ENCODE measurements at regions of chr22 and their contacts with region 1.

Region 1: DNA sequence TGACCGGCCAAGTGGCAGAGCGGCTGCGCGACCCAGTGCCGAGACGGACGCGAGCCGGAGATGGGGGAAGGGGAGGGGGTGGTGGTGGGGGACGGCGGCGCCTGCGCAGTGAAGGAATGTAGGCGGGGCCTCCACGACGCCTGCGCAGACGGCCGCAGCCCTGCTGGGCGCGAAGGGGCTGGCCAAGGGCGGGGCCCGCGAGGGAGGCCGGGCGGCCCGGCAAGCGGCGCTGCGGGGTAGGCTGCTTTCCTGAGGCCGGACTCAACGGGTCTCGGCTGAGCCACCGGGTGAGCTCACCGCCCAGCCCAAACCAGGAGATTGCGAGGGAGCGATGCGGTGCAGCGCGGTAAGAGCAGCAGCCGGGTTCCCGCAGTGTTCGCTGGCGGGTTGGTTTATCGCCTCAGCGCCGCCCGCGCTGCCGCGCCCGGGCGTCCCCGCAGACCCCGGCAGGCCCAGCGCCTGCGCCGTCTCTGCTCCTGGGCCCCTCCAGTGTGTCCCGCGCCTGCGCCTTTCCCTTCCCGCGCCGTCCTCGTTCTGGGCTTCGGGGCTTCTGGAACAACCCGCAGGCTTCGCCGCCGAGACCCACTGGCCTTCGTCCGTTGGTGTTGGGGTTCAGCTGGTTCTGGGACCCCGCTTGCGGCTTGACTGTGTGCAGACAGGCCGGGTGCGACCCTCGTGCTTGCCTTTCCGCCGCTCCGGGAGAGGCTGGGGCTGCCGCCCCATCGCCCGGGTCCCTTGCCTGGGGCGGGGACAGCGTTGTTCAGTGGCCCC is at the start of gene SPECC1L:
- DNase-seq: peak; percentile 95
- ATAC-seq: peak; percentile 90
- H3K4me3 Mint-ChIP-seq: peak within 1 kb of the TSS; percentile 78
- H3K27ac Mint-ChIP-seq: peak within 1 kb of the TSS; percentile 82
- H3K4me1 Mint-ChIP-seq: peaks cover 38% of the 10 kb centered on the region
- H3K27me3 Mint-ChIP-seq: no peaks in the 10 kb centered on the region
- total RNA-seq, gene SPECC1L: 31.5 to 38.2 TPM

Region 2: GRCh38 chr22:23437779-23438178 is 833.0 kb before region 1 on chr22:
- CTCF ChIA-PET with region 1: no interaction called
- POLR2A ChIA-PET with region 1: no interaction called
- intact Hi-C with region 1: no loop called
- DNase-seq: no peak
- ATAC-seq: no peak
- H3K4me3 Mint-ChIP-seq: no peak overlapping the region
- H3K27ac Mint-ChIP-seq: no peak overlapping the region
- H3K4me1 Mint-ChIP-seq: peaks cover 7% of the 10 kb centered on the region
- H3K27me3 Mint-ChIP-seq: peaks cover 3% of the 10 kb centered on the region

Region 3: DNA sequence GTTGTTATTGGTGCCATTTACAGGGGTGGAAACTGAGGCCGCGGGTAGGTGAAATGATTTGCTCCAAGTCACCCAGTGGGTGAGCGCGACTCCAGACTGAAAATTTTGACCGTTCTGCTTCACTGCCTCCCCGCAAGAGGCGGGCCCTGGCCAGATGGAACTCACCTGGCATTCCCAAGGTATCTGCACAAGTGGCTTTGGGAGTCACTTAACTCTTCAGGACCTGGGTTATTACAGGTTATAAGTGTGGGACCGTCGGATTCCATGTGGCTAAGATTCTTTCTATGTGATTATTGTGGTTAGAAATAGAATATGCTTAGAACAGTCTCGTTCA is 259.1 kb before region 1 on chr22:
- CTCF ChIA-PET with region 1: no interaction called
- POLR2A ChIA-PET with region 1: no interaction called
- intact Hi-C with region 1: loop called in 1 of 2 experiments (anchors 5 kb)
- DNase-seq: no peak
- ATAC-seq: no peak
- H3K4me3 Mint-ChIP-seq: peak overlapping the region; percentile 92
- H3K27ac Mint-ChIP-seq: peak overlapping the region; percentile 94
- H3K4me1 Mint-ChIP-seq: peaks cover 27% of the 10 kb centered on the region
- H3K27me3 Mint-ChIP-seq: no peaks in the 10 kb centered on the region

Region 4: DNA sequence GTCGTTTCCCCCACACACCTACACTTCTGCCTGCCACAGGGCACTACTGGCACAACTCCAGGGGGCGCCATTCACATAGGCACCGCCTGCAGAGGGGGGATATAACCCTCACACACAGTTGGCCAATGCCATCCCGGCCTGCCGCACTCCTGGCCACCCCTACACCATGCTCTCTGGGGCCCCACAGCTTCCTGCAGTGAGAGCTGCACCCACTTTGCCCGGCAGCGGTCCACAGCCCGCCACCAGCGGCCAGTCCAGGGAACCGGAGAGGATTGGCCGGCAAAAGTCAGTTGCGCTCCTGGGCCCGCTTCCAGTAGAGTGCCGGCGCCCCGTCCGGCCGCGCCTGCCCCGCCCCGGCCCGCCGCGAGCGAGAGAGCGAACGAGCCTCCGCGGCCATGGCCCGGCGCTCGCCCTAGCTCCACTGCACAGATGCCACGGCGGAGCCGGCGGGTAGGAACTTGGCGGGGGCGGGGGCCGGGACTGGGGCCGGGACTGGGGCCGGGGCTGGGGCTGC is 115.1 kb before region 1 on chr22:
- CTCF ChIA-PET with region 1: no interaction called
- POLR2A ChIA-PET with region 1: no interaction called
- intact Hi-C with region 1: no loop called
- DNase-seq: peak; percentile 74
- ATAC-seq: peak; percentile 42
- H3K4me3 Mint-ChIP-seq: peak overlapping the region; percentile 51
- H3K27ac Mint-ChIP-seq: peak overlapping the region; percentile 17
- H3K4me1 Mint-ChIP-seq: peaks cover 65% of the 10 kb centered on the region
- H3K27me3 Mint-ChIP-seq: no peaks in the 10 kb centered on the region

Region 5: GRCh38 chr22:24230911-24231656 is 39.7 kb before region 1 on chr22:
- CTCF ChIA-PET with region 1: no interaction called
- POLR2A ChIA-PET with region 1: no interaction called
- intact Hi-C with region 1: no loop called
- DNase-seq: peak; percentile 85
- ATAC-seq: peak; percentile 91
- H3K4me3 Mint-ChIP-seq: peak overlapping the region; percentile 19
- H3K27ac Mint-ChIP-seq: peak overlapping the region; percentile 42
- H3K4me1 Mint-ChIP-seq: peaks cover 2% of the 10 kb centered on the region
- H3K27me3 Mint-ChIP-seq: no peaks in the 10 kb centered on the region

Region 6: DNA sequence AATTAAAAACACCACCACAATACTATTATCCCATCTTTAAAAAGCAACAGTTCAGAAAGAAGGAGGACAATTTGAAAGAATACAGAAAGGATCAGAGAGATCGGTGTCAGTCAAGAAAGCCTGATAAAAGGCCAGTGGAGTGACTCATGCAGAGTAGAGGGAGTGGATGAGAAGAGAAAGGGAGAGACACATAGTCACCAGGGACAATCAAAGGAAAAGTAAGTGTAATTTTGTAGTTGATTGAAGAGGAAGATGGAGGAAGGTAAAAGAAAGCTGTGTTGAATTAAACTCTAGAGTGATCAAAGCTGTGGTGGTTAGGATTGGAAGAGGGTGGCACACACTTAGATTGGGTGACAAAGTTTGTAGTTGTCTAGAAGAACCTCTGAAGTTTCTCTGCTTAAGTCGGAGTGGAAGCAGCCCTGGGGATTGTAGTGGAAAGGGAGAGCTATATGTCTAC is 14.0 kb after region 1 on chr22:
- CTCF ChIA-PET with region 1: interaction called, 9 read pairs
- POLR2A ChIA-PET with region 1: interaction called, 4 read pairs
- intact Hi-C with region 1: loop called (anchors 1 kb)
- DNase-seq: peak; percentile 42
- ATAC-seq: peak; percentile 79
- H3K4me3 Mint-ChIP-seq: peak overlapping the region; percentile 1
- H3K27ac Mint-ChIP-seq: peak overlapping the region; percentile 68
- H3K4me1 Mint-ChIP-seq: peaks cover 57% of the 10 kb centered on the region
- H3K27me3 Mint-ChIP-seq: peaks cover 2% of the 10 kb centered on the region

Region 7: GRCh38 chr22:24305260-24305692 is 34.5 kb after region 1 on chr22:
- CTCF ChIA-PET with region 1: no interaction called
- POLR2A ChIA-PET with region 1: no interaction called
- intact Hi-C with region 1: loop called in 1 of 2 experiments (anchors 2 kb)
- DNase-seq: peak; percentile 45
- ATAC-seq: peak; percentile 88
- H3K4me3 Mint-ChIP-seq: no peak overlapping the region
- H3K27ac Mint-ChIP-seq: peak overlapping the region; percentile 7
- H3K4me1 Mint-ChIP-seq: peaks cover 50% of the 10 kb centered on the region
- H3K27me3 Mint-ChIP-seq: no peaks in the 10 kb centered on the region

Region 8: DNA sequence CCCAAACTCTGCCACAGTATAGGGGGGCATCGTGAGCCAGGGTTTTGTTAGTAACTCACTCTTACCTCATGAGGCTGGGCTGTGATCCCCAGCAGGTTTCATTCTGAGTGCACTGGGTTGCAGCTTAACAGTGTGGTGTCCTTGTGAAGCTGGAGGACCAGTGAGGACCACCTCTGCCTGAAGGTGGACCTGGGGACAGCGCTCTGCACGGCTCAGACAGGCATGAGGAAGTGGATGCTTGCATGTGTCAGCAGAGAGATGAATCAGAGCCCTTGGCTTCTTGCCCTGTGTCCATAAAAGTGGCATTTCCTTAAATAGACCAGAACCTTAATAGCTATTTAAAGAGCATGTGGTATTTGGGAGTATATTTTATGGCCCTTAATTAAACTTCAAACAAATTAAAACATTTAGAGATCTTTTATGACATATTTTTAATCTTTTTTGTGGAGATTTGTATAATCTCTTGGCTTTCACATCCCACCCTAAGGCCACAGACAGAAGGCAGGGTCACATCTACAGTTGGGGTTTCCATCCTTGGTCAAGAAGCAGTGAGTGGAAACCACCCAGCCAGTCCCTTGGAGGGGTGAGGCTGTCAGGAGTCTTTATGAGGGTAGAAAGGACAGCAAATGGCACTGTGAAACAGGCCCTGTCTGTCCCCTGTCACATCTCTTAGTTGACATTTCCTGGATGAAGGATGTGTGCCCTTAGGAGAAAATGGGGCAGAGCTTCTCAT is 131.8 kb after region 1 on chr22:
- CTCF ChIA-PET with region 1: no interaction called
- POLR2A ChIA-PET with region 1: no interaction called
- intact Hi-C with region 1: loop called in 1 of 2 experiments (anchors 5 kb)
- DNase-seq: peak; percentile 24
- ATAC-seq: peak; percentile 37
- H3K4me3 Mint-ChIP-seq: no peak overlapping the region
- H3K27ac Mint-ChIP-seq: peak overlapping the region; percentile 25
- H3K4me1 Mint-ChIP-seq: peaks cover 62% of the 10 kb centered on the region
- H3K27me3 Mint-ChIP-seq: no peaks in the 10 kb centered on the region

Region 9: GRCh38 chr22:24486501-24486921 is 215.7 kb after region 1 on chr22:
- CTCF ChIA-PET with region 1: no interaction called
- POLR2A ChIA-PET with region 1: interaction called, 3 read pairs
- intact Hi-C with region 1: loop called (anchors 5 kb)
- DNase-seq: peak; percentile 62
- ATAC-seq: peak; percentile 96
- H3K4me3 Mint-ChIP-seq: no peak overlapping the region
- H3K27ac Mint-ChIP-seq: peak overlapping the region; percentile 35
- H3K4me1 Mint-ChIP-seq: peaks cover 26% of the 10 kb centered on the region
- H3K27me3 Mint-ChIP-seq: no peaks in the 10 kb centered on the region

Region 10: GRCh38 chr22:24525416-24526037 is 254.7 kb after region 1 on chr22:
- CTCF ChIA-PET with region 1: interaction called, 3 read pairs
- POLR2A ChIA-PET with region 1: no interaction called
- intact Hi-C with region 1: loop called in 1 of 2 experiments (anchors 5 kb)
- DNase-seq: peak; percentile 90
- ATAC-seq: peak; percentile 92
- H3K4me3 Mint-ChIP-seq: no peak overlapping the region
- H3K27ac Mint-ChIP-seq: no peak overlapping the region
- H3K4me1 Mint-ChIP-seq: peaks cover 8% of the 10 kb centered on the region
- H3K27me3 Mint-ChIP-seq: no peaks in the 10 kb centered on the region

Region 11: GRCh38 chr22:24564376-24565058 is 293.7 kb after region 1 on chr22:
- CTCF ChIA-PET with region 1: no interaction called
- POLR2A ChIA-PET with region 1: no interaction called
- intact Hi-C with region 1: no loop called
- DNase-seq: no peak
- ATAC-seq: no peak
- H3K4me3 Mint-ChIP-seq: no peak overlapping the region
- H3K27ac Mint-ChIP-seq: peak overlapping the region; percentile 37
- H3K4me1 Mint-ChIP-seq: peaks cover 38% of the 10 kb centered on the region
- H3K27me3 Mint-ChIP-seq: no peaks in the 10 kb centered on the region